BJ (cell line): ENCODE measurements at regions of chr15 and their contacts with region 1.

Region 1: DNA sequence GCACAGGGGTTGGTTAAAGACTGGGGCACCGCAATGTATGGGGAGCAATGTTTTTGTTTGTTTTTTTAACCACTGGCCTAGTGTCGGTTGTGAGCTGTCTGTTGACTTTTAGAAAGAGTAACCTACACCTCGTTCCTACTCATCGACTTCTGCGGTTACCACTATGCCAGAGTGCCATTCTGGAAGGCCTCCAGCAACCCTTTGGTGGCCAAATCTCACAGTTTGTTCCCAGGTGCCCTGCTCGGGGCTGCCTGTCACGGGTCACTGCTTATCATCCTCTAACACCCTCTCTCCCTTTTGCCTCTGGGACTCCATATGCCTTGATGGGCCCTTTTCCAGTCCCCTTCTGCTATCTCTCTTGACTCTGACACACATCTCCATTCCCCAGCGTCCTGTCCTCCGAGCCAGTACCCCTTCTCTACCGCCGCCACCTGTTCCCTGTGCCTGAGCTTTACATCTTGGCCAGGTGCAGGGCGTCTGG is 290.4 kb upstream of the C2CD4B start:
- DNase-seq: no peak
- H3K4me3 ChIP-seq: no peak overlapping the region
- H3K27me3 ChIP-seq: no peaks in the 10 kb centered on the region
- CTCF ChIP-seq: no peak

Region 2: DNA sequence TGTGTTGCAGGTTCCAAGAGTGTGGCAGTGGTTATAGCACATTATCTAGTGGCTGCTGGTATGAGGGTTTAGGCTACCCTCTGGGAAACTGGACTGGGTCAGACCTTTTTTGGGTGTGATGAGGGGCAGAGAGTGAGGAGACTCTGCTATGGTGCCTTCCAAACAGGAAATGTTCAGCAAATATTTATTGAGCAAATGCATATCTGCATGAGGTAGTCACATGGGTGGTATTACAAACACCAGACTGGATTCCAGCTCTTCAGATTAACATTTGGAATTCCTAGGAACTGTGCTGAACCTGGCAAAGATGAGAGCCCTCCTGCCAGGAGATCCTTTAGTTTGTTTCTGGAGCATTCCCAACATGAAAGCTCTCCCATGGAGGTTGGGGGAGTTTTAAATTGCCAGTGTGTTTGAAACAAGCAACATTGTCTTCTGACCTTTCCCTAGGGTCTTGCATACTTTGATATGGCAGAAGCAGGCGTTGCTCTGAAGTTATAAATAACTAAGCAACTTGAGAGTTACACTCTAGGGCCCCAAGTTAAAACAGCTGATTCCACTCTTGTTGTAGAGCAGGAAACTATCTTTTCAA is 50.8 kb after region 1 on chr15:
- CTCF ChIA-PET with region 1: no interaction called
- POLR2A ChIA-PET with region 1: interaction called, 10 read pairs
- DNase-seq: no peak
- H3K4me3 ChIP-seq: no peak overlapping the region
- H3K27me3 ChIP-seq: no peaks in the 10 kb centered on the region
- CTCF ChIP-seq: no peak